ENCODE measurements at regions of chr17 and their contacts with region 1.

Region 1: GRCh38 chr17:82320956-82321927 is 3.8 kb upstream of the CD7 start:
- DNase-seq: no peak
- H3K4me3 ChIP-seq: peak overlapping the region in 2 of 4 donors; percentile 25 to 33
- H3K27ac ChIP-seq: no peak overlapping the region
- H3K4me1 ChIP-seq: peaks cover 6 to 19% (median 10%) of the 10 kb centered on the region in 4 donors
- H3K27me3 ChIP-seq: peaks cover 0 to 45% (median 2%) of the 10 kb centered on the region in 4 donors
- CTCF ChIP-seq: peak; percentile 96 to 99 (median 98)
- EP300 ChIP-seq: no peak
- POLR2A ChIP-seq: no peak

Region 2: DNA sequence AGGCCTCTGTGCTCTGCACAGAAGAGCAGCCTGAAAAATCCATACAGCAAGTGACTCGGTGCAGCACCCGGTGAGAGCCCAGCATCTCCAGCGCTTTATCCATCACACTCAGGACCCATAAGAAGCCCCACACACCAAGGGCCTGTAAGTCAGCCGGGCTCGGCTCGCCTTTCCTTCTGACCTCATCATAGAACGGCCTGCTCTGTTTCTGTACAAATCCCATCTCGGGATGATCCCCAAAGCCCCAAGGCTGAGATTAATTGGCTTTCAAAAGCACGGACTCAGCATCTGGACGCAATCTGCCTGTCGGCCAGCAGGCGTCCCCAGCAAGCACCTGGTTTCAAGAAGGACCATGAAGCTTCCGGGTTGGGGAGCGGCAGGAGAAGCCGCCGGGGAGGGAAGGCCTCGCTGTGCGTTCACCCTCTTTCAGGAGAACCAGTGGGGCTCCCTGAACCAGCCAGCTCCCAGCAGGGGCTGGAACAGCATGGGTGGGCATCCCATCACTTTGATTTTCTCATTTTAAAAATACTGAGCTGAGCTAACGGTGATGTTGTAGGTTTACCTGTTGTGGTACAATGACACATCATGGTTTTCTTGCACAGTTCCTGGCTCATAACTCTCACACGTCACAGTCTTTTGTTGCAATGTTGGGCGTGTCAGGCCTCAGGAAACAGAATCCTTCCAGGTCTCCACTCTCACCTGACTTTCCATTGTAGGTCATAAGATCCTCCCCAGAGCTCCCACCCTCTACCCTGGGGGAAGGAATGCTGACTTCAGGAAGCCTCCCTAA is 115.3 kb before region 1 on chr17:
- intact Hi-C with region 1: loop called (anchors 1 kb)
- DNase-seq: peak; percentile 94
- H3K4me3 ChIP-seq: peak overlapping the region in 3 of 4 donors; percentile 11 to 16 (median 15)
- H3K27ac ChIP-seq: peak overlapping the region; percentile 53 to 70 (median 62)
- H3K4me1 ChIP-seq: peaks cover 4 to 19% (median 15%) of the 10 kb centered on the region in 4 donors
- H3K27me3 ChIP-seq: no peaks in the 10 kb centered on the region
- CTCF ChIP-seq: peak; percentile 92 to 95 (median 95)
- EP300 ChIP-seq: no peak
- POLR2A ChIP-seq: no peak

Region 3: DNA sequence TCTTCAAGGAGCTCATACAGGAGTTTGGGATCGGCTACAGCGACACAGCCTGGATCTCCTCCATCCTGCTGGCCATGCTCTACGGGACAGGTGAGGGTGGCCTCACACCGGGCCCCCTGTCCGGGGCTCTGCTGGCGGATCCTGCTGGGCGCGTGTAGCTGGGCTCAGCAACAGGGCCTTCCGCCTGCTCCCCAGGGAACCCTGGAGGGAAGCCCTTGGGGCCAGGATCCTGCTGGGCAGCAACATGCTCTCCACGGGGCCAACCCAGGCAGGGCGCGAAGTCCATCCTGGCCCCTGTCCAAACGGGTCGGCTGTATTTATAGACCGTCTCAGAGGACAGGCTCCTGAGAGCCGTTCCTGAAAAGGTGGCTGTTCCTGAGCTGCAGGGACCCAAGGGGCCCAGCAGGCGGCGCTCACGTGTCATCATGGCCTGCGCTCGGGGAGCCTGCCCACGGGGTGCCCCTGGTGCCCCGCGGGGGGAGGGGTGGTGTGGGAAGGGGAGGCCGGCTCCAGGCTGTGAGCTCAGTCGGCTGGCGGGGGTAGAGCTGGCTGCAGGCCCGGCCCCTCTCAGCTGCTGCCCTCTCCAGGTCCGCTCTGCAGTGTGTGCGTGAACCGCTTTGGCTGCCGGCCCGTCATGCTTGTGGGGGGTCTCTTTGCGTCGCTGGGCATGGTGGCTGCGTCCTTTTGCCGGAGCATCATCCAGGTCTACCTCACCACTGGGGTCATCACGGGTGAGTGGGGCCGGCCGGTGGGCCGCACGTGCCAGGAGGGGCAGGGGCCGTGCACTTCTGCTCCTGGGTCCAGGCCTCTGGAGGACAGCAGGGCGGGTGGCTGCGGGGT is 84.9 kb before region 1 on chr17:
- intact Hi-C with region 1: loop called (anchors 2 kb)
- DNase-seq: peak; percentile 93
- H3K4me3 ChIP-seq: peak overlapping the region in 1 of 4 donors; percentile 7
- H3K27ac ChIP-seq: peak overlapping the region; percentile 81 to 89 (median 85)
- H3K4me1 ChIP-seq: peaks cover 71 to 96% (median 89%) of the 10 kb centered on the region in 4 donors
- H3K27me3 ChIP-seq: no peaks in the 10 kb centered on the region
- CTCF ChIP-seq: peak; percentile 95 to 99 (median 98)
- EP300 ChIP-seq: no peak
- POLR2A ChIP-seq: no peak

Region 4: GRCh38 chr17:82246365-82247174 is 74.7 kb before region 1 on chr17:
- intact Hi-C with region 1: no loop called
- DNase-seq: no peak
- H3K4me3 ChIP-seq: no peak overlapping the region
- H3K27ac ChIP-seq: peak overlapping the region; percentile 80 to 88 (median 86)
- H3K4me1 ChIP-seq: peaks cover 49 to 98% (median 85%) of the 10 kb centered on the region in 4 donors
- H3K27me3 ChIP-seq: no peaks in the 10 kb centered on the region
- CTCF ChIP-seq: no peak
- EP300 ChIP-seq: no peak
- POLR2A ChIP-seq: no peak

Region 5: GRCh38 chr17:82267575-82268379 is 53.5 kb before region 1 on chr17:
- intact Hi-C with region 1: no loop called
- DNase-seq: peak; percentile 98
- H3K4me3 ChIP-seq: peak overlapping the region; percentile 21 to 49 (median 32)
- H3K27ac ChIP-seq: peak overlapping the region; percentile 87 to 100 (median 100)
- H3K4me1 ChIP-seq: peaks cover 67 to 90% (median 82%) of the 10 kb centered on the region in 4 donors
- H3K27me3 ChIP-seq: no peaks in the 10 kb centered on the region
- CTCF ChIP-seq: peak in 1 of 3 experiments; percentile 5
- EP300 ChIP-seq: no peak
- POLR2A ChIP-seq: no peak

Region 6: DNA sequence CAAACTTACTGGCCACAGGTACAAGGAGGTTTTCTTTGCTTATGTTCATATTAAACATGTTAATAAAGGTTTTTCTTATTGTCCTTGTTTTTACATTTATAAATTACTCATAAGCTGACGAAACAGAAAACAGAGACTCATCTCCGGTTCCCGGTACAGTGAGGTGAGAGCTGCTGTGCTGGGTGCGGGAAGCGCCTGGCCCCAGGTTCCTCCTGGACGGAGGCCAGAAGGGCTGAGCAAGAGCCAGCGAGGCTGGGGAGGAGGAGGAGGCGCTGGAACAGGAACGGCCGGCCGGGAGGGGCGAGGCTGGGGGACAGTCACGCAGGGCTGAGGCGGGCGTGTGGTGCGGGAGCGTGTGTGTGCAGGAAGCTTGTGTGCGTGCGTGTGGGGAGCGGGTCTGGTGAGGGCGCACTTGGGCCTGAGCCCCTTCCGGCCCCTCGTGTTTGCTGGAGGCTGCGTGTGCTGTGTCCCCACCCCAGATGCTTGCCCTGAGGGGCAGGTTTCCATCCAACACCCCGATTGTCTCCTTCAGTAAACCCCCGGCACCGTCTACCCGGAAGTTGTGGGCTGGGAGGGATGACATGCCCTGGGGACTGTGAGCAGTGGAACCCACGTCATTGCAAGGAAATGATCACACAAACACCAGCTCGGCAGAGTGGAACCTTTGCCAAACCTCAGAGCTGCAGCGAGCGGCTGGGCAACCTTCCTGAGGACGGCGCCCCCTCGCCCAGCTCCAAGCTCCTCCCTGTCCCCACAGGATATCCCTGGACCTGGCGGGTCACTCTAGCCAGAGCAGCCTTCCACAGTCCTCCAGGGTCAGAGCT is 23.3 kb before region 1 on chr17:
- intact Hi-C with region 1: loop called (anchors 2 kb)
- DNase-seq: peak; percentile 96
- H3K4me3 ChIP-seq: peak overlapping the region; percentile 52 to 64 (median 58)
- H3K27ac ChIP-seq: peak overlapping the region; percentile 88 to 94 (median 90)
- H3K4me1 ChIP-seq: peaks cover 58 to 73% (median 67%) of the 10 kb centered on the region in 4 donors
- H3K27me3 ChIP-seq: no peaks in the 10 kb centered on the region
- CTCF ChIP-seq: no peak
- EP300 ChIP-seq: peak; percentile 95
- POLR2A ChIP-seq: peak; percentile 73